PC-9 (cell line): ENCODE measurements at regions of chr1 and their contacts with region 1.

Region 1: GRCh38 chr1:39098546-39099250 is 72.5 kb downstream of the NDUFS5 start:
- DNase-seq: peak; percentile 76 to 94
- H3K4me3 ChIP-seq: no peak overlapping the region
- H3K27ac ChIP-seq: no peak overlapping the region
- H3K4me1 ChIP-seq: peaks cover 27% of the 10 kb centered on the region
- H3K27me3 ChIP-seq: no peaks in the 10 kb centered on the region
- CTCF ChIP-seq: peak; percentile 89

Region 2: GRCh38 chr1:39132505-39133339 is 34.0 kb after region 1 on chr1:
- CTCF ChIA-PET with region 1: interaction called, 12 read pairs
- POLR2A ChIA-PET with region 1: no interaction called
- intact Hi-C with region 1: loop called (anchors 1 kb)
- DNase-seq: peak; percentile 94 to 95
- H3K4me3 ChIP-seq: no peak overlapping the region
- H3K27ac ChIP-seq: peak overlapping the region; percentile 77
- H3K4me1 ChIP-seq: peaks cover 70% of the 10 kb centered on the region
- H3K27me3 ChIP-seq: no peaks in the 10 kb centered on the region
- CTCF ChIP-seq: peak; percentile 67

Region 3: DNA sequence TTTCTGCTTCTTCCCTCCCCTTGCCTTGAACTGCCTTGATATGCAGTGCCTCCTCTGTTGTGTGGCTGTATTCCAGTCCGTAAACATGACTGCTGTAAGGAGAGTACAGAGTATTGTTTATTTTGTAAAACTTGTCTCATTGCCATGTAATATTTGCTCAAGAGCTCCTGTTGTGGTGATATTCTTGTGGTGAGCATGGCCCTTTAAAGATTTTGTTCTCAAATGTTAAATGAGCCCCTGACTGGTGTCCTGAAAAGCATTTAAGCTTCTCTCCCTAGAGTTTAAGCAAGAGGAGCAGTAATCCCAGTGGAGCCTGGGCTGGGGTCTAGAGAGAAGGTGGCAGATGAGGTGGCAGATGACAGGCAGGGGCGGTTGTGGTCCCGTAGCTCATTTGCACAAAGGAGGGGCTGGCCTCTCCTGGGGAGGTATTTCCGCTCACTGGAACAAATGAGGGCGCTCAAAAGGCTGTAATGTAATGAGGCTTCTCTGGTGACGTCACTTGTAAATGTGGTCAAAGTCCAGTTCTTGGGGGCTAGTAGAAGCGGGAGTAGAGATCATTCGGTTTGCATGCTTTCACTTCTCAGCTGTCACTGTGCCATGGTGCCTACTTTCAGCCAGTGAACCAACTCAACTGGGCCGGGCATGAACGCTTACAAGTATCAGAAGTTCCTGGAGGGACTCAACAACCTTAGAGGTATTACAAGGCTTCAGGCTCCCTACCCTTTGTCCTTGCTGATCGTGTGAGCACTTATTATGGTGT is 59.8 kb after region 1 on chr1:
- CTCF ChIA-PET with region 1: interaction called, 3 read pairs
- POLR2A ChIA-PET with region 1: no interaction called
- intact Hi-C with region 1: loop called (anchors 1 kb)
- DNase-seq: peak; percentile 42 to 58
- H3K4me3 ChIP-seq: no peak overlapping the region
- H3K27ac ChIP-seq: peak overlapping the region; percentile 59
- H3K4me1 ChIP-seq: peaks cover 67% of the 10 kb centered on the region
- H3K27me3 ChIP-seq: no peaks in the 10 kb centered on the region
- CTCF ChIP-seq: no peak

Region 4: DNA sequence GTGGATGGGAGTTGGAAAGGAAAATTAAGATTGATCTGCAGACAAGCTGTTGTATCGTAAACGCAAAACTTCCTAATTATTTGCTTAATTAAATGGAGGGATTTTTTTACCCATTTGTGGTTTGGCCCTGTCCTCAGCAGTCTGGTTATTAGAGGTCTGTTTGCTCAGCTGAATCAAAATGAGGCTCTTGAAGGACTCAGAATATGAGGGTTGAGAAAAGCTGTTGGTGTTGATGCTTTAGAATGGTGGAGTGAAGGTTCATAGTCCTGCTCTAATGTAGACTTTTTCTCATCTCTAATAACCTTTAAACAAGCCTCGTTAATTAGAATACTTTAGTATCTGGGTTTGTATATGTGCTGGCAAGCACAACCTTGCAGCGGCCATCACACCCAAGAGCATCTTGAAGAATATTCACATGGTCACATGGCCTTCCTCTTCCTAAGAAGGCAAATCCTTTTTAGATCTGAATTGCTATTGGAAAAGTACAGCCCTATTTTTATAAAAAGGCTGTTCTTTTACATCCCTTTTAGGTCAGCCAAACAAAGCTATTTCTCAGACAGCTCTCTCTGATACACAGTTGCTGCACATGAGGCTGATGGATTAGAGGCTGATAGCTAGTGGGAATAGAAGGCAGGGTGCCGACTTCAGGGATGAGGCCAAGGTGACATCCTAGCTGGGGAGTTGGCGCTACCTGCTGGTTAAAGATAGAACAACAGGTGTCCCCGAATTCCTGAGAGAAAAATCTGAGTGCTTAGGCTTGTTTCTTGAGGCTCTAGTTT is 159.6 kb after region 1 on chr1:
- CTCF ChIA-PET with region 1: interaction called, 16 read pairs
- POLR2A ChIA-PET with region 1: no interaction called
- intact Hi-C with region 1: loop called (anchors 1 kb)
- DNase-seq: peak; percentile 47 to 78
- H3K4me3 ChIP-seq: no peak overlapping the region
- H3K27ac ChIP-seq: no peak overlapping the region
- H3K4me1 ChIP-seq: 0 out of 2 replicates have a peak, but pooled peaks cover 5% of the 10 kb centered on the region
- H3K27me3 ChIP-seq: no peaks in the 10 kb centered on the region
- CTCF ChIP-seq: peak; percentile 94

Region 5: GRCh38 chr1:39538588-39539465 is 440.1 kb after region 1 on chr1:
- CTCF ChIA-PET with region 1: interaction called, 8 read pairs
- POLR2A ChIA-PET with region 1: no interaction called
- intact Hi-C with region 1: loop called (anchors 1 kb)
- DNase-seq: peak in 1 of 2 experiments; percentile 60
- H3K4me3 ChIP-seq: no peak overlapping the region
- H3K27ac ChIP-seq: no peak overlapping the region
- H3K4me1 ChIP-seq: no peaks in the 10 kb centered on the region
- H3K27me3 ChIP-seq: no peaks in the 10 kb centered on the region
- CTCF ChIP-seq: peak; percentile 86

Region 6: DNA sequence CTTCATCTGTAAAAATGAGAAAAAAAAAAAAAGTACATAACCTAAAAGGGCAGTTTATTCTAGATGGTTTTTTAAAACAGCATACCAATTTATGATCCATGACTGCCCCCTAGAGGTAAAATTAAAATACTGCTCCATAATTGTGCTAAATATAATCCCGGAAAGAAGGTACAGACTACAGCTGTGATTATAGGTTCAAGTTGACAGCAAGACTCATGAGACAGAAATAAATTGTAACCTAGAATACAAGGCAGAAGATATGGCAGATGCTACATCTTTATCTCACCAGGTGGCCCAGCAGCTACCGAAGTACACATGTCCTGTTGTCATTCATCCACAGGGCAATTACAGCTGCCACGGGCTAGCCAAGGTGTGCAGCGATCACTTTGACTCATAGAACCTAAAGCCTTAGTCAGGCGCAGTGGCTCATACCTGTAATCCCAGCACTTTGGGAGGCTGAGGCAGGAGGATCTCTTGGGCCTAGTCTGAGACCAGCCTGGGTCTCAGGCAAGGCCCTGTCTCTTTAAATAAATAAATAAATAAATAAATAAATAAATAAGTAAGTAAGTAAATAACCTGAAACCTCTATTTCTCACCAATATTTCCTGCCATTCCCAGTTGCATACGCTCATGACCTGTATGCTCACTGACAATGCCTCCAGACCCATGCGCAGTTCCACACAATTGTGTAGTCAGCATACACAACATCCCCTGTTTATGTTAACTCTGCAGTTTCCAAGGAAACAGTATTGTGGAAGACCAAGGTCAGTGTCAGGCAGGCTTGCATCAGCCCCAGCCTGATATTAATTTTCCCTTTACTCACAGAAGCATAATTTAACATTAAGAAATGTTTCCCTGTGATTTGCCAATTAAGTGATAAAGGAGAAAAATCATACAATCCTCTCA is 621.6 kb after region 1 on chr1:
- CTCF ChIA-PET with region 1: no interaction called
- POLR2A ChIA-PET with region 1: no interaction called
- intact Hi-C with region 1: loop called (anchors 1 kb)
- DNase-seq: peak; percentile 6 to 61
- H3K4me3 ChIP-seq: no peak overlapping the region
- H3K27ac ChIP-seq: no peak overlapping the region
- H3K4me1 ChIP-seq: no peaks in the 10 kb centered on the region
- H3K27me3 ChIP-seq: peaks cover 5% of the 10 kb centered on the region; the same call in 1 of the 2 replicates
- CTCF ChIP-seq: peak; percentile 89